Activated CD8-positive, alpha-beta T cell treated with anti-CD3 and anti-CD28 coated beads for 36 hours (primary cell): ENCODE measurements at regions of chr9 and their contacts with region 1.

Region 1: GRCh38 chr9:71571186-71571585 is 197.1 kb downstream of the CEMIP2 start:
- DNase-seq: no peak
- ATAC-seq: no peak
- H3K4me3 Mint-ChIP-seq: no peak overlapping the region
- H3K27ac Mint-ChIP-seq: no peak overlapping the region
- H3K4me1 Mint-ChIP-seq: no peaks in the 10 kb centered on the region
- H3K27me3 Mint-ChIP-seq: peaks cover 17% of the 10 kb centered on the region
- CTCF ChIP-seq: no peak

Region 2: DNA sequence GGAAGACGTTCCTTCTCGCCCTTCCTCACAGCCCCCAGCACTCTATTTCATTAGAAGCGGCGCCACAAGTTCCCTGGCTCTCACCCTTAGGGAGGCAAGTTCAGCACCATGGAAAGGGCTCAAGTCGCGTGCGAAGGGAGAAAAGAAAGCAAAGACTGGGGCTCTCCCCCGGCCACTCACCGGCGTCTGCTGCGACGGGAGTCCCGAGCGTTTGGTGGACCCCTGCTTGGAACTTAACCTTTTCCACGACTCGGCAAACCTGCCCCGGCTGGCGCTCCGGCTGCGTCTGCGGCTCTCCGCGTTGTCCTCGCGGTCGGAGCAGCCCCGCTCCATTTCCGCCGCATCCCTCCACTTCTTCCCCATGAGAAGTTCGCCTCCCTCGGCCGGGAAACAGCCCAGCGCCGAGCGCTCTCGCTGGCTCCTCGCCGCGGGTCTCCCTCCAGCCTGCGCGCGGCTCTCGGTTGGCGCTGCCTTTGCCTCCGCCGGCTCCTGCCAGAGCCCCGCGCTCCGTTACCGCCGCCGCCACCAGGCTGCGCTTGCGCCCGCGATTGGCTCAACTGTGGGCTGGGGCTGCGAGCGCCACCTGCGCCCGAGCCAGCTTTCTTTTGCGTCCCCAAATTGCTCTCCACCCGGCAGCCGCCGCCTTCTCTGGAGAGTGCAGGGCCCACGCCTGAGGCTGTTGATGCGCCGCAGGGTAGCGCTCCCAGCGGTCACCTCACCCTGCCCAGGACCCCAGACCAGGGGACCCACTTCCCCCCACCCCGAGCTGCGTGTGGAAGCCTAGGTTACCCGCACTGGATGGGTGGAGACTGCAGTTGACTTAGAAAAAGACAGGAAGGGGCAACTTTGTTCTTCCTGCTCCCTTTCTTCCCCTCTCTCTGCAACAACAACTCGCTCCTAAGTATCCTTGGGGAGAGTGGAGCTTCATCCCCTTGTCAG is 124.4 kb before region 1 on chr9:
- CTCF ChIA-PET with region 1: no interaction called
- POLR2A ChIA-PET with region 1: no interaction called
- intact Hi-C with region 1: no loop called
- DNase-seq: peak; percentile 67
- ATAC-seq: peak; percentile 74
- H3K4me3 Mint-ChIP-seq: no peak overlapping the region
- H3K27ac Mint-ChIP-seq: no peak overlapping the region
- H3K4me1 Mint-ChIP-seq: peaks cover 3% of the 10 kb centered on the region
- H3K27me3 Mint-ChIP-seq: peaks cover 35% of the 10 kb centered on the region
- CTCF ChIP-seq: no peak

Region 3: GRCh38 chr9:71518045-71518827 is 53.0 kb before region 1 on chr9:
- CTCF ChIA-PET with region 1: no interaction called
- POLR2A ChIA-PET with region 1: no interaction called
- intact Hi-C with region 1: loop called (anchors 10 kb)
- DNase-seq: no peak
- ATAC-seq: no peak
- H3K4me3 Mint-ChIP-seq: no peak overlapping the region
- H3K27ac Mint-ChIP-seq: no peak overlapping the region
- H3K4me1 Mint-ChIP-seq: no peaks in the 10 kb centered on the region
- H3K27me3 Mint-ChIP-seq: peaks cover 20% of the 10 kb centered on the region
- CTCF ChIP-seq: no peak